Mammary epithelial cell (primary cell): ENCODE measurements at regions of chr7 and their contacts with region 1.

Region 1: GRCh38 chr7:36115448-36116321 is 37.4 kb upstream of the EEPD1 start:
- DNase-seq: peak; percentile 95
- H3K4me3 ChIP-seq: peak overlapping the region in 1 of 3 experiments; percentile 11
- H3K27ac ChIP-seq: peak overlapping the region; percentile 69
- H3K4me1 ChIP-seq: peaks cover 42% of the 10 kb centered on the region
- H3K27me3 ChIP-seq: no peaks in the 10 kb centered on the region
- CTCF ChIP-seq: no peak

Region 2: DNA sequence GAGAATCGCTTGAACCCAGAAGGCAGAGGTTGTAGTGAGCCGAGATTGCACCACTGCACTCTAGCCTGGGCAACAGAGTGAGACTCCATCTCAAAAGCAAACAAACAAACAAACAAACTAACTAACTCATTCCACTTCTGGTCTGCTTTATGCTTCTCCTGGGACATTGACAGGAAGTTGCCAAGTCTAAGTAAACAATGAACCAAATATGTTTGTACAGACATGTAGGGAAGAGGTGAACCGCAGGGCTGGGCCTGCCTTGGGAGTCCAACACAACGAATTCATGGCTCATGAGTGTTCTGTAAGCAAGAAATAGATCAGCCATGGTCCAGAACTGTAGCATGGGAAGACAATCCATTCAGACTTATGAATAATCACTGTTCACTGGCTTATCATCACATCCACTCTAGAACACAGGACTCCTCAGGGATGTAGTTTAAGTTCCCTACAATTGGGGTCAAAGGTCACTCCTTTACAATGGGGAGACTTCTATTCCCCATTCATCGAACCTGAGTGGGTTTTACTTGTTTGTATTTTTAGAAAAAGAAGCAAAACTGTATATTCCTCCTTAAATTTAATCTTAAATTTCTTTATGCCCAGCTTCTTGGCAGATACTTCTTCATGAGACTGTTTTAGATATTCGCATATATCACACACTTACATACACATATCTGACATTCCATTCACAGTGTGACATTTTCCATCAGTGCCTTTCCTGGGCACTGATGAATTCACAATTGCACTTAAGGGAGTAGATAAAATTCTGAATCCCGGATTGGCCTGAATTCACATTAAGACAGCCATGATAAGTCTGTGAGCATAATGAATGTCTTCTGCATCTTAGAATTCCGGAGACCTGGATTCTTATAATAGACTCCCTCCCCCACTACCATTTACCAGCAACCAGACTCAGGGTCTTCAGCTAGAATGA is 121.7 kb before region 1 on chr7:
- CTCF ChIA-PET with region 1: no interaction called
- dilution Hi-C with region 1: no loop called
- in situ Hi-C with region 1: no loop called
- intact Hi-C with region 1: loop called (anchors 5 kb)
- DNase-seq: peak; percentile 56
- H3K4me3 ChIP-seq: no peak overlapping the region
- H3K27ac ChIP-seq: no peak overlapping the region
- H3K4me1 ChIP-seq: peaks cover 5% of the 10 kb centered on the region
- H3K27me3 ChIP-seq: no peaks in the 10 kb centered on the region
- CTCF ChIP-seq: no peak

Region 3: GRCh38 chr7:36048141-36048901 is 67.4 kb before region 1 on chr7:
- CTCF ChIA-PET with region 1: interaction called, 3 read pairs
- dilution Hi-C with region 1: no loop called
- in situ Hi-C with region 1: no loop called
- intact Hi-C with region 1: loop called (anchors 5 kb)
- DNase-seq: peak; percentile 83
- H3K4me3 ChIP-seq: no peak overlapping the region
- H3K27ac ChIP-seq: no peak overlapping the region
- H3K4me1 ChIP-seq: peaks cover 18% of the 10 kb centered on the region
- H3K27me3 ChIP-seq: no peaks in the 10 kb centered on the region
- CTCF ChIP-seq: no peak

Region 4: GRCh38 chr7:36152756-36153570 is 37.3 kb after region 1 on chr7 and contains the start of gene EEPD1:
- CTCF ChIA-PET with region 1: interaction called, 3 read pairs
- dilution Hi-C with region 1: no loop called
- in situ Hi-C with region 1: no loop called
- intact Hi-C with region 1: loop called (anchors 2 kb)
- DNase-seq: peak; percentile 99
- H3K4me3 ChIP-seq: peak within 1 kb of the TSS; percentile 67 to 79 (median 74)
- H3K27ac ChIP-seq: peak within 1 kb of the TSS; percentile 24
- H3K4me1 ChIP-seq: peaks cover 18% of the 10 kb centered on the region
- H3K27me3 ChIP-seq: no peaks in the 10 kb centered on the region
- CTCF ChIP-seq: no peak
- total RNA-seq, gene EEPD1: 1.9 to 2.0 TPM

Region 5: GRCh38 chr7:36161981-36162380 is 46.3 kb after region 1 on chr7:
- CTCF ChIA-PET with region 1: interaction called, 3 read pairs
- dilution Hi-C with region 1: loop called (anchors 5 kb)
- in situ Hi-C with region 1: no loop called
- intact Hi-C with region 1: no loop called
- DNase-seq: peak; percentile 69
- H3K4me3 ChIP-seq: no peak overlapping the region
- H3K27ac ChIP-seq: no peak overlapping the region
- H3K4me1 ChIP-seq: peaks cover 21% of the 10 kb centered on the region
- H3K27me3 ChIP-seq: no peaks in the 10 kb centered on the region
- CTCF ChIP-seq: no peak